Common myeloid progenitor, CD34-positive (primary cell): ENCODE measurements at regions of chr3 and their contacts with region 1.

Region 1: GRCh38 chr3:14222900-14223594 is 44.4 kb downstream of the LSM3 start:
- DNase-seq: no peak
- H3K4me3 ChIP-seq: no peak overlapping the region
- H3K27ac ChIP-seq: no peak overlapping the region
- H3K4me1 ChIP-seq: peaks cover 0 to 8% (median 3%) of the 10 kb centered on the region in 4 experiments
- H3K27me3 ChIP-seq: no peaks in the 10 kb centered on the region

Region 2: GRCh38 chr3:14234251-14235002 is 11.4 kb after region 1 on chr3:
- CTCF ChIA-PET with region 1: interaction called, 21 read pairs
- POLR2A ChIA-PET with region 1: no interaction called
- DNase-seq: no peak
- H3K4me3 ChIP-seq: no peak overlapping the region
- H3K27ac ChIP-seq: no peak overlapping the region
- H3K4me1 ChIP-seq: peaks cover 15 to 52% (median 40%) of the 10 kb centered on the region in 4 experiments
- H3K27me3 ChIP-seq: no peaks in the 10 kb centered on the region

Region 3: DNA sequence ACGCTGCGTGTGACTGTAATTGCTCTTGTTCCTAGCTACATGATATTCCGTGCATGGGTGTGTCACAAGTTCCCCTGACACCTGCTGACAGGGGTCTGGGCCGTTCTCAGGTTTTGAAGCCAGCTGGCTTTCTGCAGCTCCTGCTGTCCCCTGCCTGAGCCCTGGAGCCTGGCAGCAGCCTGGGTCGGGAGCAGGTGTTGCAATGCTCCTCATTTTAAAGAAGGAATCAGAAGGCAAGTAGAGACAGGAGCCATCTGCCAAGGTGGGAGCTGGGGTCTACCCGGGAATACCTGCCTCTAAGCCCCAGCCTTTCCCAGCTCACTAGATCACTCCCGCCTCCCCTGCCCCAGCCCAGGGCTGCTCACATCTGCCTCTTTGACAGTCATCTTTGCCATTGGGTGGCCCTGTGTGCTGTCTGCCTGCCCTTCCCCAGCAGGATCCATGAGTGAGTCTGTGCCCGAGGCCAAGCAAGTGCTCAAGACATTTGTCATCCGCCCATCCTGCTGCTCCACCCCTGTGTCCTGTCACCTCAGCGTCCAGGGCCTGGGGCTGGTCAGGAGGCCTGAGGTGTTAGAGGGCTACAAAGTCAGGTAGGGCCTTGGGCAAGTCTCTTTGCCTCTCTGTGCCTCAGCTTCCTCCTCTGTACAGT is 44.8 kb after region 1 on chr3:
- CTCF ChIA-PET with region 1: no interaction called
- POLR2A ChIA-PET with region 1: no interaction called
- DNase-seq: no peak
- H3K4me3 ChIP-seq: no peak overlapping the region
- H3K27ac ChIP-seq: no peak overlapping the region
- H3K4me1 ChIP-seq: no peaks in the 10 kb centered on the region
- H3K27me3 ChIP-seq: no peaks in the 10 kb centered on the region

Region 4: GRCh38 chr3:14289590-14290461 is 66.8 kb after region 1 on chr3:
- CTCF ChIA-PET with region 1: no interaction called
- POLR2A ChIA-PET with region 1: no interaction called
- DNase-seq: peak in 2 of 3 donors; percentile 13 to 24
- H3K4me3 ChIP-seq: no peak overlapping the region
- H3K27ac ChIP-seq: no peak overlapping the region
- H3K4me1 ChIP-seq: peaks cover 0 to 13% (median 10%) of the 10 kb centered on the region in 4 experiments
- H3K27me3 ChIP-seq: no peaks in the 10 kb centered on the region

Region 5: DNA sequence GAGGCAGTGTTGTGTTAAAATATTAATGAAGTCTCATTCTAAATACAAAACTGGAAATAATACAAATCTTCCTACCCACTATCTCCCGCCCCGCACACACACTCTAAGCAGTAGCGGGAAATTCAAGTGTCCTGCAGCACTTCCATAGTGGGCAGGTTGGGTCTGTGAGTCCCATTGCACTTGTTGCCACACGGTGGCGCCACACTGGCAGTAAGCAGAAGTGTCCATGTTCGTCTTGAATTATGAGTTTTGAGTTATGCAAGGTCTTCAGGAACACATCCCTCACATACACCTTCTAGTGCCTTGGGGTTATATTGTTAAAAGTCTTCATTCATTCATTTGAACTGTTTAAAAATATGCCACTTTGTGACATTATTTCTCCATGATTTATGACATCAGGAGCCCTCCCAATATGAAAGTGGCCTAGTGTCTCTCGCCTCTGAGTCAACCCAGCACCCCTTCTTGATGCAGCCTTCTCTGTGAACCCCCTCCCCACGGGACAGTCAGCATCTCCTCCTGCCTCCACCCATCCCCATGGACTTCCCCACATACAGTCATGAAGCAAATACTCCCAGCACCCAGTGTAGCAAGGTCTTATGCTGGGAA is 410.9 kb after region 1 on chr3:
- CTCF ChIA-PET with region 1: no interaction called
- POLR2A ChIA-PET with region 1: no interaction called
- DNase-seq: peak; percentile 78 to 88 (median 85)
- H3K4me3 ChIP-seq: no peak overlapping the region
- H3K27ac ChIP-seq: no peak overlapping the region
- H3K4me1 ChIP-seq: no peaks in the 10 kb centered on the region
- H3K27me3 ChIP-seq: peaks cover 0 to 12% (median 6%) of the 10 kb centered on the region in 5 experiments